ENCODE measurements at regions of chr6 and their contacts with region 1.

Region 1: GRCh38 chr6:127302728-127303660 is 36.3 kb downstream of the RNF146 start:
- DNase-seq: no peak
- H3K4me3 Mint-ChIP-seq: no peak overlapping the region
- H3K27ac Mint-ChIP-seq: no peak overlapping the region
- H3K4me1 Mint-ChIP-seq: peaks cover 10% of the 10 kb centered on the region
- H3K27me3 Mint-ChIP-seq: no peaks in the 10 kb centered on the region

Region 2: DNA sequence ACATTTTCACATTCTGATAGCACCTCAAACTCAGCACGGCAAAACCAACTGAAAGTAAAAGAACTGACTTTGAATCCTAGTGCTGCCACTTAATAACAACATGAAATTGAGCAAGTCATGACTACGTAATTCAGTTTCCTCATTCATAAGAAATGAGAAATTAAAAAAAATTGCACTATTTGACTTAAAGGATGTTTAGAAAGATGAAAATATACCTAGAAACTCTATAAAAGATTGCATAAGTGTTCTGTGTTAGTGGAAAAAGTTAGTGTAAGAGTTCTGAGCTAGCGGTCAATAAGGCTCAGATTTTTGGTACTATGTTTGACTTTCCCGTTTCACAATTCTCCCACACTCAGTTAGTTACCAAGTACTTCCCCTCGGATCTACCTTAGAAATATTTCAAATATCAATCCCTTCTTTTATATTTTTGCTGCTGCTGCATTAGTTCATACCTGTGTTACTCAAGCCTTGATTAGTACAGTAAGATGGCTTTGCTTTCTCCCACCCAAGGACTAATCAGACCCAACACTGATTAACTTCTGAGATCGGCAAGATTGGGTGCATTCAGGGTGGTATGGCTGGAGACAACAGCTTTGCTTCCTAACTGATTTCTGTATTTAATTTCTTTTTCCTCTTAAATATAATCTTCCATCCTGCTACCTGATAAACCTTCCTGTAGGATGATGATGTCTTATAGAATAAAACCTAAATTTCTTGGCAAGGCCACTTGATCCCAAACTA is 14.6 kb after region 1 on chr6:
- intact Hi-C with region 1: loop called (anchors 1 kb)
- DNase-seq: no peak
- H3K4me3 Mint-ChIP-seq: no peak overlapping the region
- H3K27ac Mint-ChIP-seq: no peak overlapping the region
- H3K4me1 Mint-ChIP-seq: peaks cover 6% of the 10 kb centered on the region
- H3K27me3 Mint-ChIP-seq: no peaks in the 10 kb centered on the region

Region 3: GRCh38 chr6:127539272-127539671 is 236.3 kb after region 1 on chr6:
- intact Hi-C with region 1: loop called (anchors 1 kb)
- DNase-seq: no peak
- H3K4me3 Mint-ChIP-seq: no peak overlapping the region
- H3K27ac Mint-ChIP-seq: no peak overlapping the region
- H3K4me1 Mint-ChIP-seq: peaks cover 5% of the 10 kb centered on the region
- H3K27me3 Mint-ChIP-seq: peaks cover 17% of the 10 kb centered on the region

Region 4: DNA sequence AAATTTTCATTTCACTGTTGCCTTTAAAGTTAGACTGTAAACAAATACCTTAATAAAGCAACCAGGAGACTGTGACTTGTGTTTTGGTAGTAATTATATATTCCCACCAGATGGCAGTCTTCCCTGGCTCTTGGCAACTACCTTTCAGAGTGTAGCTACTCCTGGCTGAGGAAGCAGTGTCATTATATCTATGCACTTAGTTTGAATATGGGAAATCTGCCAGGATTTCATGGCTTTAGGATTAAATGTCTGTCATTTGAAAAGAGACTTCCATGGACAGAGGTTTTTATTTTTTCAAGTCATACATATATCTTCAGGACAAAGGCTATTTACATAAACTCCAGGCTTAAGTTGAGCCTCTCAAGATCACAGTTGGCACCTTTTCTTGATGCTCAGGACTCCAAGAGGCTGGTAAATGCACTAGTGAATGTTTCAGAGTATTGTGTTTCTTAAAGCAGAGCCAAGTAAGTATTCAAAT is 434.1 kb after region 1 on chr6:
- intact Hi-C with region 1: no loop called
- DNase-seq: peak; percentile 4
- H3K4me3 Mint-ChIP-seq: no peak overlapping the region
- H3K27ac Mint-ChIP-seq: peak overlapping the region; percentile 29
- H3K4me1 Mint-ChIP-seq: peaks cover 15% of the 10 kb centered on the region
- H3K27me3 Mint-ChIP-seq: no peaks in the 10 kb centered on the region

Measured in activated T-helper 1 cell treated with anti-CD3 and anti-CD28 coated beads, Interleukin-12 subunit alpha, Interleukin-12 subunit beta, Interleukin-2, Interleukin-4 antibody, amounts not matched to agents 30 ng/mL and 10 ng/mL and 1 ng/mL, durations not matched to agents 14 hours and 24 hours and 36 hours (primary cell).